Kidney (tissue), 22 donors: ENCODE measurements at regions of chr6 and their contacts with region 1.

Region 1: GRCh38 chr6:166775180-166776081 is 148.4 kb upstream of the RPS6KA2 start:
- DNase-seq: peak in 4 of 5 donors; percentile 62 to 91 (median 73)
- H3K4me3 ChIP-seq: no peak overlapping the region
- H3K27ac ChIP-seq: no peak overlapping the region
- H3K4me1 ChIP-seq: no peaks in the 10 kb centered on the region
- H3K27me3 ChIP-seq: no peaks in the 10 kb centered on the region
- CTCF ChIP-seq: peak; percentile 90

Region 2: DNA sequence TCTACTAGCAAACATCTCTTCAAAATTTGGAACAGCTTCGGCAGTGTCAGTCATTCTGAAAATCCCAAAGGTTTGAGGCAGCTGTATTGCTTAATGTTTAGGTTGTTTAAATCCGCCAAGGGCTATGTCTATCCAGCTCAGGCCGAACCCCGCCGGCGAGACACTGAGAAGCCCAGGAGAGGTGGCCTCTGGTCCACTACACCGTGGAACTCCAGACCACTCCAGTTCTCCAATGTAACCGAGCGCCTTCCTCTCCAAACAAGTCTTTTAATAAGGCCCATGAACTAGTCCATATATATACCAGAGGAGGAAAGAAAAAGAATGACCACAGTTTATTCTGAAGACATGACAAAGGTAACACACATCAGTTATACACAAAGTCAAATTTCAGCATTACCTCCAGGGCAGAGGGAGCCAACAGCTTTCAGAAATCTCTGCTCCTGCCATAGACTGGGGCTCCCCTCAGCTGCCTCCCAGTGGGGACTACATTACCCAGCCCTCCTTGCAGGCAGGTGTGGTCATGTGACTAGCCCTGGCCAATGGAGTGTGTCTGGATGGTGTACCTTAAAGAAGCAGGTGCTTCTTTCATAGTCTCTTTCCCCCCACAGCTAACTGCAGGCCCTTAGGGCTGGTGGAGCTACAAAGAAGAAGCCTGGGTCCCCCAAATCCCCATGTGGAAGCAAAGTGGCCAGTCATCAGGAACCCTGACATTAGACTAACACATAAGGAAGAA is 188.8 kb before region 1 on chr6 and contains the start of gene RAMACL:
- intact Hi-C with region 1: no loop called
- DNase-seq: peak in 1 of 5 donors; percentile 39
- H3K4me3 ChIP-seq: no peak within 1 kb of the TSS
- H3K27ac ChIP-seq: no peak within 1 kb of the TSS
- H3K4me1 ChIP-seq: peaks cover 0 to 13% (median 9%) of the 10 kb centered on the region in 3 donors
- H3K27me3 ChIP-seq: no peaks in the 10 kb centered on the region
- CTCF ChIP-seq: no peak
- total RNA-seq, gene RAMACL: 1.9 TPM

Region 3: GRCh38 chr6:166849749-166850183 is 74.3 kb after region 1 on chr6:
- intact Hi-C with region 1: no loop called
- DNase-seq: no peak
- H3K4me3 ChIP-seq: no peak overlapping the region
- H3K27ac ChIP-seq: no peak overlapping the region
- H3K4me1 ChIP-seq: no peaks in the 10 kb centered on the region
- H3K27me3 ChIP-seq: no peaks in the 10 kb centered on the region
- CTCF ChIP-seq: no peak

Region 4: GRCh38 chr6:167141667-167142432 is 366.4 kb after region 1 on chr6:
- intact Hi-C with region 1: loop called (anchors 10 kb)
- DNase-seq: peak in 4 of 5 donors; percentile 58 to 67 (median 60)
- H3K4me3 ChIP-seq: no peak overlapping the region
- H3K27ac ChIP-seq: no peak overlapping the region
- H3K4me1 ChIP-seq: no peaks in the 10 kb centered on the region
- H3K27me3 ChIP-seq: no peaks in the 10 kb centered on the region
- CTCF ChIP-seq: peak; percentile 79